Activated CD4-positive, alpha-beta memory T cell treated with anti-CD3 and anti-CD28 coated beads for 36 hours (primary cell): ENCODE measurements at regions of chr14 and their contacts with region 1.

Region 1: DNA sequence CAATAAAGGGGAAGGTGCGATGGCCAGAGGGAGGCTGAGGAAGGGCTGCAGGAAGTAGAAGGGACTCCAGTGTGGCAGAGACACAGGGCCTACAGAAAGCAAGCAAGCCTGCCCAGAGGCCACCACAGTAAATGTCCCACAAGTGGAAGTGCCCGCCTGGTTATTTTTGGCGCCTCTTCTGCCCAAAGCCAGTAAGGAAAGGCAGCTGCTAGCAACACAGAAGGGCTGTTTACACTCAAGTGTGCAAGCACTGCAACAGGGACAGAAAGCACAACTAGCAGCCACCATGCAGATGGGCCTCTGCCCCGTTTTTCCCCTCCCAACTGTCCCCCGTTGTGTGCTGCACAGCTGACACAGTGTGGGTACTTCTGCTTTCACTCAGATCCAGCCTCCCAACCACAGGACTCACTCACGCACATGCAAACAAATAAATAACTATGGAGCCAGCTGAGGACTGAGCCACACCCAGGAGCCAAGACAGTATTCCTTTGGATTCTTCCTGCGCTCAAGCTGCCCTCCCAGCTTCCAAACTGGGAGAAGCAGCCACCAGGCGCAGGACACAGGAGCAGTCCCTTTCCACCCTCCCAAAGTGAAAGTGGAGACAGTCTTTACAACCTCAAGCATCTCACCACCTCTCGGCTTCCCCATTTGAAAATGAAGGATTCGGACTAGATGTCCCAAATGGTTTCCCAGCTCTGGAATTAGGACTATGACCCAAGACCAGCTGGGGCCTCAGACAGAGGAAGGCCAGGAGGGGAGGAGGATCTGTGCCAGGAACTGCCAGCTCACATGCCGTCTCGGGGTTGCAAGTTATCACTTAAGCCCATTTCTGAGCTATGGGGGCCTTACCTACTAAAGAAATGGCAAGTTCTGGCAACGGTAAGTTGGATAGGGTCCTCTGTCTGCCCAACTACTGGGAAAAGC is 40.0 kb upstream of the PNMA1 start:
- DNase-seq: peak; percentile 84
- H3K4me3 Mint-ChIP-seq: peak overlapping the region; percentile 87
- H3K27ac Mint-ChIP-seq: peak overlapping the region; percentile 95
- H3K4me1 Mint-ChIP-seq: peaks cover 86% of the 10 kb centered on the region
- H3K27me3 Mint-ChIP-seq: no peaks in the 10 kb centered on the region

Region 2: GRCh38 chr14:73741386-73741875 is 12.8 kb before region 1 on chr14:
- CTCF ChIA-PET with region 1: interaction called, 56 read pairs
- POLR2A ChIA-PET with region 1: interaction called, 56 read pairs
- intact Hi-C with region 1: loop called (anchors 1 kb)
- DNase-seq: peak; percentile 85
- H3K4me3 Mint-ChIP-seq: peak overlapping the region; percentile 43
- H3K27ac Mint-ChIP-seq: peak overlapping the region; percentile 89
- H3K4me1 Mint-ChIP-seq: peaks cover 64% of the 10 kb centered on the region
- H3K27me3 Mint-ChIP-seq: no peaks in the 10 kb centered on the region

Region 3: DNA sequence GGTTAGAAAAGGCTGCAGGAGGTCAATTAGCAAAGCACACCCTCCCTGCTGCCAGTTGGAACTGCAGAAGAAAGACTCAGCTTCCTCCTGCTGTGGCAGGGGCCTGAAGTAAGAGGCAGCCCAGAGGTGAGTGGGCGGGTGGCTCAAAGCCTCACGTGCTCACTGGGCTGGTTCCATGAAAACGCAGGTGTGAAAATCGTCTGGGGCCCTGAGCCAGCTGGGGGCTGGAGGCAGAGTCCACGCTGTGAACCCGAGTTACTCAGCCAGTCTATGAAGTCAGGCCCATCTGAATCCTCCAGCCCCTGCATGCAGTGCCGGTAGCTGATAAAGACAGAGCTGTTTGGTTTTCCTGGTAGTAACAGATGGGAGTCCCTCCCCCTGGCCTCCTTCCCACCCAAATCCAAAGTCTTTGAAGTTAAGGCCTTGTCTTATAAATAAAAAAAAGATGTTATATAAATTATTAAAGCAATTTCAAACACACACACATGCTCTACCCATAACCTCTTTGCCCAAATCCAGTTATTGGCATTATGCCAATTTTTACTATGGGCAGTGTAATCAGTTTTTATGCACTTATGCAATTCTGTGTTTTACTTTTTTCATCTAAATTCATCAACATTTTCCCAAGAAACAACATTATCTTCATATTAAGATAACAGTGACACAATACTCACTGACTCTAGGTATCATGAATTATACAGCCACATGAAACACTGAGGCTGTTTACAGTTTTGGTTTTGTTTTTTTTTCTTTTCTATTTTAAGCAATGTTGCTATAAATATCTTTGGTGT is 17.8 kb after region 1 on chr14:
- CTCF ChIA-PET with region 1: interaction called, 44 read pairs
- POLR2A ChIA-PET with region 1: interaction called, 128 read pairs
- intact Hi-C with region 1: no loop called
- DNase-seq: peak; percentile 93
- H3K4me3 Mint-ChIP-seq: peak overlapping the region; percentile 55
- H3K27ac Mint-ChIP-seq: peak overlapping the region; percentile 90
- H3K4me1 Mint-ChIP-seq: peaks cover 66% of the 10 kb centered on the region
- H3K27me3 Mint-ChIP-seq: no peaks in the 10 kb centered on the region

Region 4: GRCh38 chr14:73785873-73786695 is 31.9 kb after region 1 on chr14:
- CTCF ChIA-PET with region 1: interaction called, 55 read pairs
- POLR2A ChIA-PET with region 1: interaction called, 211 read pairs
- intact Hi-C with region 1: loop called (anchors 5 kb)
- DNase-seq: peak; percentile 80
- H3K4me3 Mint-ChIP-seq: peak overlapping the region; percentile 90
- H3K27ac Mint-ChIP-seq: peak overlapping the region; percentile 93
- H3K4me1 Mint-ChIP-seq: peaks cover 56% of the 10 kb centered on the region
- H3K27me3 Mint-ChIP-seq: no peaks in the 10 kb centered on the region

Region 5: DNA sequence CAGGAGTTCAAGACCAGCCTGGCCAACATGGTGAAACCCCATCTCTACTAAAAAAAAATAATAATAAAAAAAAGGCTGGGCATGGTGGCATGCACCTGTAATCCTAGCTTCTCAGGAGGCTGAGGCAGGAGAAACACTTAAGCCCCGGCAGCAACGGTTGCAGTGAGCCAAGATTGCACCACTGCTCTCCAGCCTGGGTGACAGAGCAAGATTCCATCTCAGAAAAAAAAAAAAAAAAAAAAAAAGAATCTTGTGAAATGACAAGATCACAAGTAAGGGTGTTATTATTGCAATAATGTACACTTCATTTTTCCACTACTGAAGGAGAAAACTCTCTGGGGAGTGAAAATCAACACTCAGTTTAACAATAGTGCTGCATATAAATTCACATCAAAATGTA is 88.6 kb after region 1 on chr14:
- CTCF ChIA-PET with region 1: no interaction called
- POLR2A ChIA-PET with region 1: no interaction called
- intact Hi-C with region 1: no loop called
- DNase-seq: no peak
- H3K4me3 Mint-ChIP-seq: no peak overlapping the region
- H3K27ac Mint-ChIP-seq: no peak overlapping the region
- H3K4me1 Mint-ChIP-seq: no peaks in the 10 kb centered on the region
- H3K27me3 Mint-ChIP-seq: no peaks in the 10 kb centered on the region